ENCODE measurements at regions of chr21 and their contacts with region 1.

Region 1: DNA sequence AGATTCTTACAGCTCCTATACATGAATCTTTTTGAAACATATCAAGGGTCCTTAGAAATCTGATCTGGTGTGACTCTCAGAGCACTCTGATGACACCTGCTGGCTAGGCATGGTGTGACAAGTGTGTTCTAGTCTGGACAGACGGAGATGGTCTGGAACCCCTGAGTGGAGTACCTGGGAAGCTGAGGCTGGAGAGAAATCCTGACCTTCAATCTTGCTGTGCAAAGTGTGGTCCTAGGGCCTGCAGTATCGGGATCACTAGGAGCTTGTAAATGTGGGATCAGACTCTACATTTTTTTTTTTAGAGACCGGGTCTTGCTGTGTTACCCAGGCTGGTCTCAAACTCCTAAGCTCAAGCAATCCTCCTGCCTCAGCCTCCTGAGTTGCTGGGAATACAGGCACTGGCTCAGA is 78.6 kb upstream of the SOD1 start:
- DNase-seq: peak; percentile 58 to 72 (median 66)
- H3K4me3 ChIP-seq: no peak overlapping the region
- H3K4me3 Mint-ChIP-seq: no peak overlapping the region
- H3K27ac ChIP-seq: no peak overlapping the region
- H3K27ac Mint-ChIP-seq: no peak overlapping the region
- H3K4me1 ChIP-seq: no peaks in the 10 kb centered on the region
- H3K4me1 Mint-ChIP-seq: peaks cover 3 to 6% (median 4%) of the 10 kb centered on the region in 4 donors
- H3K27me3 ChIP-seq: no peaks in the 10 kb centered on the region
- H3K27me3 Mint-ChIP-seq: peaks cover 0 to 3% of the 10 kb centered on the region in 2 donors

Region 2: GRCh38 chr21:31107871-31108270 is 473.0 kb before region 1 on chr21:
- CTCF ChIA-PET with region 1: interaction called, 29 read pairs
- POLR2A ChIA-PET with region 1: no interaction called
- intact Hi-C with region 1: no loop called
- DNase-seq: no peak
- H3K4me3 ChIP-seq: no peak overlapping the region
- H3K4me3 Mint-ChIP-seq: no peak overlapping the region
- H3K27ac ChIP-seq: no peak overlapping the region
- H3K27ac Mint-ChIP-seq: no peak overlapping the region
- H3K4me1 ChIP-seq: peaks cover 12% of the 10 kb centered on the region
- H3K4me1 Mint-ChIP-seq: peaks cover 13 to 21% (median 16%) of the 10 kb centered on the region in 4 donors
- H3K27me3 ChIP-seq: no peaks in the 10 kb centered on the region
- H3K27me3 Mint-ChIP-seq: no peaks in the 10 kb centered on the region

Region 3: DNA sequence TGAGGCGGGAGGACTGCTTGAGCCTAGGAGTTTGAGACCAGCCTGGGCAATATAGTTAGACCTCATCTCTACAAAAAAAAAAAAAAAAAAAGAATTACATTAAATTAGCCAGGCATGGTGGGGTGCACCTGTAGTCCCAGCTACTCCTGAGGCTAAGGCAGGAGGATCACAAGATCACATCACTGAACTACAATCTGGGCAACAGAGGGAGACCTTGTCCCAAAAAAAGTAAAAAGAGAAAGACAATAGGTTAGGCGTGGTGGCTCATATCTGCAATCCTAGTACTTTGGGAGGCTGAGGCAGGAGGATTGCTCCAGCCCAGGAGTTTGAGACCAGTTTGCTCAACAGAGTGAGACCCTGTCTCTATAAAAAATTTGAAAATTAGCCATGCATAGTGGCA is 367.1 kb before region 1 on chr21:
- CTCF ChIA-PET with region 1: interaction called, 57 read pairs
- POLR2A ChIA-PET with region 1: no interaction called
- intact Hi-C with region 1: loop called (anchors 1 kb)
- DNase-seq: peak in 4 of 5 donors; percentile 10 to 24 (median 13)
- H3K4me3 ChIP-seq: no peak overlapping the region
- H3K4me3 Mint-ChIP-seq: no peak overlapping the region
- H3K27ac ChIP-seq: no peak overlapping the region
- H3K27ac Mint-ChIP-seq: peak overlapping the region in 1 of 7 donors; percentile 7
- H3K4me1 ChIP-seq: no peaks in the 10 kb centered on the region
- H3K4me1 Mint-ChIP-seq: no peaks in the 10 kb centered on the region
- H3K27me3 ChIP-seq: no peaks in the 10 kb centered on the region
- H3K27me3 Mint-ChIP-seq: no peaks in the 10 kb centered on the region

Region 4: GRCh38 chr21:31293986-31294385 is 286.9 kb before region 1 on chr21:
- CTCF ChIA-PET with region 1: no interaction called
- POLR2A ChIA-PET with region 1: no interaction called
- intact Hi-C with region 1: no loop called
- DNase-seq: no peak
- H3K4me3 ChIP-seq: no peak overlapping the region
- H3K4me3 Mint-ChIP-seq: no peak overlapping the region
- H3K27ac ChIP-seq: no peak overlapping the region
- H3K27ac Mint-ChIP-seq: peak overlapping the region in 1 of 7 donors; percentile 42
- H3K4me1 ChIP-seq: no peaks in the 10 kb centered on the region
- H3K4me1 Mint-ChIP-seq: peaks cover 6 to 12% (median 8%) of the 10 kb centered on the region in 4 donors
- H3K27me3 ChIP-seq: no peaks in the 10 kb centered on the region
- H3K27me3 Mint-ChIP-seq: no peaks in the 10 kb centered on the region

Region 5: GRCh38 chr21:31592963-31593560 is 12.2 kb after region 1 on chr21:
- CTCF ChIA-PET with region 1: interaction called, 14 read pairs
- POLR2A ChIA-PET with region 1: no interaction called
- intact Hi-C with region 1: no loop called
- DNase-seq: no peak
- H3K4me3 ChIP-seq: no peak overlapping the region
- H3K4me3 Mint-ChIP-seq: no peak overlapping the region
- H3K27ac ChIP-seq: no peak overlapping the region
- H3K27ac Mint-ChIP-seq: peak overlapping the region in 1 of 7 donors; percentile 41
- H3K4me1 ChIP-seq: no peaks in the 10 kb centered on the region
- H3K4me1 Mint-ChIP-seq: no peaks in the 10 kb centered on the region
- H3K27me3 ChIP-seq: no peaks in the 10 kb centered on the region
- H3K27me3 Mint-ChIP-seq: peaks cover 2 to 4% of the 10 kb centered on the region in 2 donors

Region 6: DNA sequence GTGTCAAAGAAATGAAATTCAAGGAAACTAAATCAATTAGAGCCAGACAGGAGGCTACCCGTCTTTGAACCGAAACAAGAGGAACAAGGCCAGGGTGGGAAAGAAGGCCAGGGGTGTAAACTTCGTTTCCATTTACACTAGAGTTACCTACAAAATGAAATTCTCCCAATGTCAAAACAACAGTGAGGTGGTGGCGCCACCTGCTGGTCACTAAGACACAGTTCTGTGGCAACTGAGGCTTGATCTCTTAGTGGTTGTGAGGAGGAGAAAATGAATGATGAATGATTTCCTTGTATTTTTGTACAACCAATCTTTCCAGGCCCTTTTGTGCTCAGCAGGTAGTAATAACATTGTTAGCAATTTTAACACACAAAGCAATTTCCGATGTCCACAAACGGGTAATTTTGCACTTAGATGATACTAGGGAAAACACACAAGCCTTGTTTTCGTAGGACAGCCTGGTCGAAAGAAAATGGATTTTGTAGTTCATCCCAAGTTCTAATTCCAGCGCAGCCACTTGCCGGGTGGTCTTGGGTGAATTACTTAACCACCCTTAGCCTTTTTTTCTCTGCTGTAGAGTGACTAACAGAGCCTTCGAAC is 23.8 kb after region 1 on chr21:
- CTCF ChIA-PET with region 1: interaction called, 18 read pairs
- POLR2A ChIA-PET with region 1: no interaction called
- intact Hi-C with region 1: loop called (anchors 2 kb)
- DNase-seq: peak; percentile 52 to 63 (median 61)
- H3K4me3 ChIP-seq: no peak overlapping the region
- H3K4me3 Mint-ChIP-seq: peak overlapping the region in 1 of 8 donors; percentile 23
- H3K27ac ChIP-seq: no peak overlapping the region
- H3K27ac Mint-ChIP-seq: peak overlapping the region in 1 of 7 donors; percentile 43
- H3K4me1 ChIP-seq: no peaks in the 10 kb centered on the region
- H3K4me1 Mint-ChIP-seq: peaks cover 0 to 5% (median under 1%) of the 10 kb centered on the region in 4 donors
- H3K27me3 ChIP-seq: no peaks in the 10 kb centered on the region
- H3K27me3 Mint-ChIP-seq: peaks cover 3 to 6% of the 10 kb centered on the region in 2 donors

Region 7: GRCh38 chr21:31665397-31665796 is 84.5 kb after region 1 on chr21:
- CTCF ChIA-PET with region 1: no interaction called
- POLR2A ChIA-PET with region 1: no interaction called
- intact Hi-C with region 1: no loop called
- DNase-seq: peak in 2 of 5 donors; percentile 13 to 21
- H3K4me3 ChIP-seq: no peak overlapping the region
- H3K4me3 Mint-ChIP-seq: peak overlapping the region; percentile 51 to 88 (median 67)
- H3K27ac ChIP-seq: no peak overlapping the region
- H3K27ac Mint-ChIP-seq: peak overlapping the region; percentile 43 to 86 (median 80)
- H3K4me1 ChIP-seq: peaks cover 83% of the 10 kb centered on the region
- H3K4me1 Mint-ChIP-seq: peaks cover 47 to 79% (median 66%) of the 10 kb centered on the region in 4 donors
- H3K27me3 ChIP-seq: no peaks in the 10 kb centered on the region
- H3K27me3 Mint-ChIP-seq: no peaks in the 10 kb centered on the region